ENCODE measurements at regions of chr6 and their contacts with region 1.

Region 1: DNA sequence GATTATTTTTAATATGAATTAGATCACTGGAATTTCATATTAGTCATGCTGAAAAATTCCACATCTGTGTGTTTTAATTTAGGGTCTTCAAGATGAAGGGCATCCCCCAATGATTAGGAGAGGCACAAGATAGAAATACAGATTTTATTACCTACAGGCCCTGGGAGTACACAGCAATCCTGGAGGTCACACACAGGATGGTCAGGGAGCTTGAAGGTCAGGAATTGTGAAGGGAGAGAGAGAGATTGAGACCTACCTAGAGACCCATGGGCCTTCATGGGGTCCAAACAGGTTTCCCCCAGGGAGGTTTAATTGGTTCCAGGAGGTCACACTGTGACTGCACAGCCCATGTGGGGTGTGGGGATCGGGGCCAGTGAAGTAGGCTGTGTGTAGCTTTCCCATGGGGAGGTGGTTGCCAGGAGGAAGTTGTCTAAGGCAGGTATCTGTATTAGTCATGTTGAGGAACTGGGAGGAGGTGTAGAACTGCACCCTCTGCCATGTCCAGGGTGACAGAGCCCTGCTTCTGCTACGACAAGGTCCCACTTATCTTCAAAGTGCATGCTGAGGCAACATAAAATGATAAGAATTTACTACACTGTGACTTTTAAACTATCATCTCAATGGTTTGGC is 18.3 kb downstream of the SNX9 start:
- DNase-seq: peak; percentile 36
- H3K4me3 Mint-ChIP-seq: no peak overlapping the region
- H3K27ac Mint-ChIP-seq: peak overlapping the region; percentile 59
- H3K4me1 Mint-ChIP-seq: peaks cover 84% of the 10 kb centered on the region
- H3K27me3 Mint-ChIP-seq: no peaks in the 10 kb centered on the region

Region 2: GRCh38 chr6:157823528-157824370 is 17.6 kb before region 1 on chr6:
- CTCF ChIA-PET with region 1: interaction called, 3 read pairs
- intact Hi-C with region 1: loop called (anchors 1 kb)
- DNase-seq: peak; percentile 96
- H3K4me3 Mint-ChIP-seq: peak overlapping the region; percentile 80
- H3K27ac Mint-ChIP-seq: peak overlapping the region; percentile 96
- H3K4me1 Mint-ChIP-seq: peaks cover 42% of the 10 kb centered on the region
- H3K27me3 Mint-ChIP-seq: peaks cover 4% of the 10 kb centered on the region

Region 3: DNA sequence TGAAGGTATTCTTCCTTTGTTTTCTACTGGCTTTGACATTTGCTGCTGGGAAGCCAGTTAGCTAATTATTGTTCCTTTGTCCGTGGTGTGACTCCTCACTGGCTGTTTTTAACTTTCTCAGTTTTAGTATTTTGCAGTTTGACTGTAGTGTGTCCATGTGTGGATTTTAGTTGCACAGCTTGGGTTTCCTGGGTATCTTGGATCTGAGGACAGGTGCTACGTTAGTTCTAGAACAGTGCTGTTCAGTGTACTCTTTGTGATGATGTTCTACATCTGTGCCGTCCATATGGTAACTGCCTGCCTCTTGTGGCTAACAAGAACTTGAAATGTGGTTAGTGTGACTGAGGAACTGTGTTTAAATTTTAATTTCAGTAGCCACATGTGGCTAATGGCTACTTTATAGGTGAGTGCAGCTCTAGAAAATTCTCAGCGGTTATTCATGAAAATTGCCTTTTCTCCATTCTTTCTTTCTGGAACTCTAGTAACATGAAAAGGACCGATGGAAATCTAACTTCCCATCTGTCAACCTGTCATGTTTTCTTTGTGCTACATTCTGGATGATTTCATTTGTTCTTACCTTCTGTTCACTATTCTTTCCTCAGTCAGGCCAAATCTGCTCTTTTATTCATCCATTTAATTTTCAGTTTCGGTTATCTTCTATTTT is 10.8 kb before region 1 on chr6:
- CTCF ChIA-PET with region 1: interaction called, 4 read pairs
- intact Hi-C with region 1: loop called (anchors 1 kb)
- DNase-seq: no peak
- H3K4me3 Mint-ChIP-seq: peak overlapping the region; percentile 34
- H3K27ac Mint-ChIP-seq: peak overlapping the region; percentile 54
- H3K4me1 Mint-ChIP-seq: peaks cover 71% of the 10 kb centered on the region
- H3K27me3 Mint-ChIP-seq: no peaks in the 10 kb centered on the region

Measured in activated naive CD4-positive, alpha-beta T cell treated with anti-CD3 and anti-CD28 coated beads for 36 hours (primary cell).